H1 (cell line): ENCODE measurements at regions of chr9 and their contacts with region 1.

Region 1: GRCh38 chr9:124532897-124533296 is 25.7 kb upstream of the NR5A1 start:
- DNase-seq: no peak
- H3K4me3 ChIP-seq: no peak overlapping the region
- H3K27ac ChIP-seq: no peak overlapping the region
- H3K4me1 ChIP-seq: no peaks in the 10 kb centered on the region
- H3K27me3 ChIP-seq: no peaks in the 10 kb centered on the region
- CTCF ChIP-seq: peak; percentile 11 to 31 (median 21); a peak in 3 of 4 replicates
- EP300 ChIP-seq: no peak
- POLR2A ChIP-seq: no peak
- RAD21 ChIP-seq: peak in 1 of 2 experiments; percentile 20; a peak in 1 of 4 replicates

Region 2: DNA sequence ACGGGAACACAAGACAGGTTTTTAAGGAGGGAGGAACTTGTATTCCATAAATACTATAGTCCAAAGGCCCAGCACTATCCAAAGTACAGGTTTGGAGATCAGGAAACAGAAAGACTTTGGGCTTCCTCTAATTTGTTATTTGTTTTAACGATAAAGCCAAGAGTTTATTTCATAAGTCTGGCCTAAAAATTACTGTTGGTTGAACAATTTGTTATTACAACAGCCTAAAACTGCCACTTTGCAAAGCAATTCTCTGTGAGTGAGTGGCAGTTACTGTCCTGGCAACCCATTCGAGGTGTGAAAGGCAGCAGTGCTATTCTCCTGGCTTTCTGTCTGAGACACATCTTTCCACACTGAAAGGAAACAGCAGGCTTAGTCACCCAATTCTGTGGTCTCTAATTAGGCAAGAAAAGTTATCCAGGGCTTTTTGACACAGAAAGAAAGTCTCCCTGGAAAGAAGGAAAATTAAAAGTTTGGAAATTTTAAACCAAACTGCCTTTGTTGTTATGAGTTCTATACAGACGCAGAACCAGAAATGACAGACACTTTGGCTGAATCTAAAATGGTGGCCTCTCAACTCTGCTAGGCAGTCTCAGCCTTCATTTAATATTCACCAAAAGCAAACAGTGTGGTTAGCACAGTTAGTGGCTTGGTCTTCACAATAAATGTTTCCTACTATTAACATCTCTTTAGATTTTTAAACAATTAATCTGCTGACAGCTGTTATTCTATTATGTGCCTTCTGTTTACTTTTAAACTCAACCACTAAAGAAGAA is 151.5 kb before region 1 on chr9:
- CTCF ChIA-PET with region 1: no interaction called
- POLR2A ChIA-PET with region 1: no interaction called
- DNase-seq: no peak
- H3K4me3 ChIP-seq: no peak overlapping the region
- H3K27ac ChIP-seq: no peak overlapping the region
- H3K4me1 ChIP-seq: no peaks in the 10 kb centered on the region
- H3K27me3 ChIP-seq: no peaks in the 10 kb centered on the region
- CTCF ChIP-seq: no peak
- EP300 ChIP-seq: no peak
- POLR2A ChIP-seq: no peak
- RAD21 ChIP-seq: no peak

Region 3: GRCh38 chr9:124513376-124513994 is 19.4 kb before region 1 on chr9:
- CTCF ChIA-PET with region 1: interaction called, 234 read pairs
- POLR2A ChIA-PET with region 1: interaction called, 4 read pairs
- DNase-seq: peak in 1 of 2 experiments; percentile 49
- H3K4me3 ChIP-seq: no peak overlapping the region
- H3K27ac ChIP-seq: no peak overlapping the region
- H3K4me1 ChIP-seq: peaks cover 0 to 18% (median 4%) of the 10 kb centered on the region in 4 experiments; a peak in 5 of 7 replicates
- H3K27me3 ChIP-seq: no peaks in the 10 kb centered on the region
- CTCF ChIP-seq: no peak
- EP300 ChIP-seq: no peak
- POLR2A ChIP-seq: no peak
- RAD21 ChIP-seq: no peak